ENCODE measurements at regions of chr6 and their contacts with region 1.

Region 1: GRCh38 chr6:46652603-46653438 is at the starts of genes CYP39A1 and SLC25A27:
- DNase-seq: peak; percentile 90
- H3K4me3 ChIP-seq: peak within 1 kb of the TSS; percentile 85
- H3K27ac ChIP-seq: peak within 1 kb of the TSS; percentile 96
- H3K4me1 ChIP-seq: peaks cover 10% of the 10 kb centered on the region
- CTCF ChIP-seq: no peak
- total RNA-seq, gene CYP39A1: 13.4 and 15.4 TPM in 2 replicates
- total RNA-seq, gene SLC25A27: 155 and 175 TPM in 2 replicates

Region 2: DNA sequence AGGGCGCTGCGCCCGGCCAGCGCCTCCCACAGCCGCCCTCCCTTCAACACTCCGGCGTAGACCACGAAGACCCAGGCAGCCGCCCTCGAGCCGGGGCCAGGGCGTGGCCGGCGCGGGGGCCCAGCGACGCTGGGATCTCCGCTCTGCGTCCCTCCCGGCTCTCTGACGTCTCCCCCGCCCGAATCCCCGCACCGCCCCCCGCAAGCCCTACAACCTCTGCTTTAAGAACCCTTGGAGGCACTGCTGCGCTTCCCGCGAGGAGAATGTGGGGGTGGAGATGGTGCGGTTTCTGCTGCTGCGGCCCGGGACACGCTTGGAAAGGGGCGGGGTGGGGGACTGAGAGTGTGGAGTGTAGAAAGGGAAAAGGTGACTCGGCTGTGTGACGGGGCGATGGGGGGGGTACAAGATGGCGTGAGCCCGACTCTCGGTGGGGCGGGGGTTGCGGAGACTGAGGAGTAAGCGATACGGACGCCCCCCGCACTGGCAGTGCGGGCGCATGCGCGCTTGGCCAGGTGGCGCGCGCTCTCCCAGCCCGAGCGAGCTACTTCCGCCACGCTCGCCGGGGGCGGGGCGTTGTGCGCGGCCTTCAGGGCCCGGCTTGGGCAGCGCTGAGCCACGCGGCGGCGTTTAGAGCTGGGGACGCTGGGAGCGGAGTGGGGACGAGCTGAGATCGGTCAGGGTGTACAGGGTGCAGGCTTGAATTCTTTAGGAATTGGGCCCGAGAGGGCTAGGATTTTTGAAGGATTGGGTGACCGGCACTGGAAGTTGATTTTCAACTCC is 1275.1 kb before region 1 on chr6 and contains the start of gene SUPT3H:
- CTCF ChIA-PET with region 1: no interaction called
- POLR2A ChIA-PET with region 1: no interaction called
- intact Hi-C with region 1: loop called (anchors 5 kb)
- DNase-seq: peak; percentile 92
- H3K4me3 ChIP-seq: peak within 1 kb of the TSS; percentile 80
- H3K27ac ChIP-seq: peak within 1 kb of the TSS; percentile 21
- H3K4me1 ChIP-seq: peaks cover 16% of the 10 kb centered on the region
- CTCF ChIP-seq: peak; percentile 25; the same call in 1 of the 2 replicates
- total RNA-seq, gene SUPT3H: 0.44 and 1.1 TPM in 2 replicates

Region 3: GRCh38 chr6:46129629-46130511 is 523.0 kb before region 1 on chr6 and contains the start of gene ENPP4:
- CTCF ChIA-PET with region 1: no interaction called
- POLR2A ChIA-PET with region 1: no interaction called
- intact Hi-C with region 1: loop called (anchors 10 kb)
- DNase-seq: peak; percentile 96
- H3K4me3 ChIP-seq: peak within 1 kb of the TSS; percentile 84
- H3K27ac ChIP-seq: peak within 1 kb of the TSS; percentile 57
- H3K4me1 ChIP-seq: peaks cover 18% of the 10 kb centered on the region
- CTCF ChIP-seq: peak; percentile 22; the same call in 1 of the 2 replicates
- total RNA-seq, gene ENPP4: 5.7 and 7.1 TPM in 2 replicates

Region 4: DNA sequence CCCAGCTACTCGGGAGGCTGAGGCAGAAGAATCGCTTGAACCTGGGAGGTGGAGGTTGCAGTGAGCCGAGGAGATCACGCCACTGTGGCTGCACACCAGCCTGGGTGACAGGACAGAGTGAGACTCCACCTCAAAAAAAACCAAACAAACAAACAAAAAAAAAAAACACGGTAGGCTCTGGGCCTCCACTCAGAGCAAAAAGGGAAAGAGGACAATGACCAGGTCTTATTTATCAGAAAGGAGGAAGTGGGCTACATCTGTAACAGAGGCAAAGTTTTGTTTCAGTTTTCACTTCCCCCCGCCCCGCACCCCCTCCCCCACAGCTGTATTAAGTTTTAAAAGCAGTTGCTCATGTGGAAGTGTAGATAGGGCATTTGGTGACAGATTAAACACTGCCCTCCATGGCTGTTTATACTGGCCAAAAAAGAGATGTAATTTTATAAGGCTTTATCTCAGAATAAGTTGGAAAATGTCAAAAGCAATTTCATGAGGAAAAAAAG is 276.2 kb before region 1 on chr6:
- CTCF ChIA-PET with region 1: no interaction called
- POLR2A ChIA-PET with region 1: interaction called, 3 read pairs
- intact Hi-C with region 1: loop called (anchors 5 kb)
- DNase-seq: peak; percentile 87
- H3K4me3 ChIP-seq: peak overlapping the region; percentile 51
- H3K27ac ChIP-seq: peak overlapping the region; percentile 82
- H3K4me1 ChIP-seq: peaks cover 56% of the 10 kb centered on the region
- CTCF ChIP-seq: no peak

Region 5: DNA sequence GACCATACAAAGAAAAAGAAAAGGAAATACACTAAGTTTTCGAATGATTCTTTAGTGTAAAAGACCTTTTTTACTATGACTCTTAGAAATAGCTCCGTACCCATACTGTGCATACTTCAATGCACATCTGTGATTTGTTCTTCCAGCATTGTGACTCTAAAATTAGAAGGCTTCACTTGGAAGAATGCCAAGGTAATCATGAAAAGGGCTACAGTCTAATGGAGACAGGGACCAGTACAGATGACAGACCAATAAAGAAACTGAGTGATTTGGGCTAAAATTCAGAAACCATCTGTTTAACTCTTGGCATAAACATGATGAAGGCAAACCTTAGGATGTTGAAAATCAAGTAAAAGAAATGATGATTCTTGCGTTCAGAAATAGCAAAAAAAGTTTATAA is 46.5 kb before region 1 on chr6:
- CTCF ChIA-PET with region 1: no interaction called
- POLR2A ChIA-PET with region 1: no interaction called
- intact Hi-C with region 1: no loop called
- DNase-seq: no peak
- H3K4me3 ChIP-seq: no peak overlapping the region
- H3K27ac ChIP-seq: no peak overlapping the region
- H3K4me1 ChIP-seq: no peaks in the 10 kb centered on the region
- CTCF ChIP-seq: no peak

Region 6: DNA sequence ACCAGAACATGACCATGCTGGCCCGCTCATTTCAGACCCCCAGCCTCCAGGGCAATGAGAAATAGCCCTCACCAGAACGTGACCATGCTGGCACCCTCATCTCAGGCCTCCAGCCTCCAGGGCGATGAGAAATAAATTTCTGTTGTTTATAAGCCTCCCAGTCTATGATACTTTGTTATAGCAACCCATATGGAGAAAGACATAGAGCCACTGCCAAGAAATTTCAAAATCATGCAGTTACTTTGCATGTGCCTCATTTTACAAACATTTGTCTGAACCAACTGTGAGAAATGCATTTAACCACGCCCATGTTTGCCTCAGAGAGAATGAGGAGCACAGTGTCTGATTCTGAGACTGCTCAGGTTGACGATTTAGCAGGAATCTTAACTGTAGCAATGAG is 15.7 kb before region 1 on chr6:
- CTCF ChIA-PET with region 1: no interaction called
- POLR2A ChIA-PET with region 1: interaction called, 31 read pairs
- intact Hi-C with region 1: loop called (anchors 1 kb)
- DNase-seq: peak; percentile 78
- H3K4me3 ChIP-seq: peak overlapping the region; percentile 66
- H3K27ac ChIP-seq: peak overlapping the region; percentile 97
- H3K4me1 ChIP-seq: peaks cover 98% of the 10 kb centered on the region
- CTCF ChIP-seq: no peak